MCF 10A (cell line): ENCODE measurements at regions of chr6 and their contacts with region 1.

Region 1: DNA sequence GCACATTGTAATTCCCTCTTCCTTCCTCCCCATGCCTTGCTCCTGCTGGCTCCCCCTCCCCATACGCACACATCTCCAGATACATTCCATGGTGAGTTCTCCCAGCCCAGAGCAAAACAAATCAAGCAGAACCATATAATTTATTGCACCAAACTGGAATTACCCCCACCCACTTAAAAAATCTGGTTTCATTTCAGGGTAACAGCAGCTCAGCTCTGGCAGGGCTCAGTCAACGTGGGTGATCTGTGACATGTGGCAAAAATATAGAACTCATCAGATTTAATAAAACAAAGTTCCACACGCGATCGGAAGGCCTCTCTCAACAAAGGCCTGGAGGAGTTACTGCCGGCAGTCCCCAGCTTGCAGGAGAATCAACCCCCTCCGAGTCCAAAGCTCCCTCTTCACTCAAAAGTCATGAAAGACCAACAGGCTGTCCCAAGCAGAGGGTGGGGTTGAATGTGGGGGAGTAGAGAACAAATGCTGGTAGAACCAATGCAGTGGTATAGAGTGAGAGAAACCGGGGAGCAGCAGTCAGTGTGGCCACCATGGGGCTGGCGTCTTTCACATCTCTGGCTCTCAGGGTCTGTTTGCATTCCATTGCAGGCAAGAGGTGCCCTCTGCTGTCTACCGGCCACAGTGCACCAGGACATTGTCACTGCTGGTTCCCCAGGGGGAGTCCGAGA is 323.3 kb upstream of the NT5E start:
- DNase-seq: peak; percentile 73
- H3K4me3 Mint-ChIP-seq: no peak overlapping the region
- H3K27ac Mint-ChIP-seq: no peak overlapping the region
- H3K4me1 Mint-ChIP-seq: peaks cover 22% of the 10 kb centered on the region
- H3K27me3 Mint-ChIP-seq: no peaks in the 10 kb centered on the region
- CTCF ChIP-seq: peak; percentile 80

Region 2: GRCh38 chr6:84243240-84243639 is 883.4 kb before region 1 on chr6:
- CTCF ChIA-PET with region 1: interaction called, 4 read pairs
- POLR2A ChIA-PET with region 1: no interaction called
- intact Hi-C with region 1: loop called (anchors 1 kb)
- DNase-seq: no peak
- H3K4me3 Mint-ChIP-seq: no peak overlapping the region
- H3K27ac Mint-ChIP-seq: no peak overlapping the region
- H3K4me1 Mint-ChIP-seq: no peaks in the 10 kb centered on the region
- H3K27me3 Mint-ChIP-seq: no peaks in the 10 kb centered on the region
- CTCF ChIP-seq: peak; percentile 27

Region 3: GRCh38 chr6:84340422-84340821 is 786.2 kb before region 1 on chr6:
- CTCF ChIA-PET with region 1: no interaction called
- POLR2A ChIA-PET with region 1: no interaction called
- intact Hi-C with region 1: no loop called
- DNase-seq: no peak
- H3K4me3 Mint-ChIP-seq: no peak overlapping the region
- H3K27ac Mint-ChIP-seq: no peak overlapping the region
- H3K4me1 Mint-ChIP-seq: no peaks in the 10 kb centered on the region
- H3K27me3 Mint-ChIP-seq: no peaks in the 10 kb centered on the region
- CTCF ChIP-seq: no peak

Region 4: DNA sequence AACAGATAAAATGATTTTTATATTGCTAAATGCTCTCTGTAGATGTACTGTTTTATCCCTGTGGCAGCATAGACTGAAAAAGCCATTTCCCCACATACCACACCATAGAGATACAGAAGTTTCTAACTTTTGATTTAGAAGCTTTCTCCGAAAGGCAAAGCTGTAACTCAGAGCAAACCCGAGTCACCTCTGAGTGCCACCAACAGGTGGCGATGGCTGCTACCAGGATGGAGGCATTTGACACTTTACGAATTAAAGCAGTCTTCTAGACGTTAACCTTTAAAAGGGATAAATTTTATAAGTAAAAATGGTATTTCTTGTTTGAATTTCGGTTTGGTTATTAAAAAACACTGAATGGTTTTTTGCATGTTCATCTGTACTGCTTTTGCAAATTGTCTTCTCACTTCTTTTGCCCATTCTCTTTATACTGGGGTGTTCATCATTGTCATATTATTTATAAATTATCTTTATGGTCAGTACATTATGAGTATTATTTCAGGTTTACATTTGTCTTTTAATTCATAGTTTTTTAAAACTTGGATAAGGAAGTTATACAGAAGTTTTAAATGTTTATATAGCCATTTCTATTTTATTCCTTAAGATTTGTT is 698.2 kb before region 1 on chr6:
- CTCF ChIA-PET with region 1: interaction called, 6 read pairs
- POLR2A ChIA-PET with region 1: no interaction called
- intact Hi-C with region 1: loop called (anchors 1 kb)
- DNase-seq: peak; percentile 66
- H3K4me3 Mint-ChIP-seq: no peak overlapping the region
- H3K27ac Mint-ChIP-seq: no peak overlapping the region
- H3K4me1 Mint-ChIP-seq: peaks cover 22% of the 10 kb centered on the region
- H3K27me3 Mint-ChIP-seq: no peaks in the 10 kb centered on the region
- CTCF ChIP-seq: peak; percentile 86

Region 5: DNA sequence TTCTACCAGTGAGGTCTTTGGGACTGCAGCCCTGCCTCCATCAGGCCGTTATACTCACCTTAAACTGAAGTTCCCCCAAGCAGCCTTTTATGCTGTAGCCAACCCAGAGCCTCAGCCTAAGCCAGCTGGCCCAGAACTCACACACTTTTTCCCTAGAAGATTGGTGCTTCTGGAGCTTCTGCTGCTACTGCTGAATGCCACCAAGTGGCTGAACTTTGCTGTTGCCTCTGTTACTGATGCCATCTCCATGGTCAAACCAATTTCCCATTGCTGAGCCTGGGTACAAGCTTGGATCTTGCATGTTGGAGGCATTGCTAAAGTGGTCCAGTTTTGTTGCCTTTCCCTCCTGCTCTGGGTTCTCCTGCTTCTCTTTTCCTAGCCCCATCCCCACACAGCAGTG is 347.2 kb before region 1 on chr6:
- CTCF ChIA-PET with region 1: interaction called, 4 read pairs
- POLR2A ChIA-PET with region 1: no interaction called
- intact Hi-C with region 1: loop called (anchors 5 kb)
- DNase-seq: peak; percentile 14
- H3K4me3 Mint-ChIP-seq: no peak overlapping the region
- H3K27ac Mint-ChIP-seq: peak overlapping the region; percentile 18
- H3K4me1 Mint-ChIP-seq: peaks cover 22% of the 10 kb centered on the region
- H3K27me3 Mint-ChIP-seq: no peaks in the 10 kb centered on the region
- CTCF ChIP-seq: peak; percentile 10

Region 6: GRCh38 chr6:84973606-84974005 is 153.0 kb before region 1 on chr6:
- CTCF ChIA-PET with region 1: interaction called, 3 read pairs
- POLR2A ChIA-PET with region 1: no interaction called
- intact Hi-C with region 1: loop called (anchors 2 kb)
- DNase-seq: no peak
- H3K4me3 Mint-ChIP-seq: no peak overlapping the region
- H3K27ac Mint-ChIP-seq: no peak overlapping the region
- H3K4me1 Mint-ChIP-seq: peaks cover 13% of the 10 kb centered on the region
- H3K27me3 Mint-ChIP-seq: no peaks in the 10 kb centered on the region
- CTCF ChIP-seq: no peak

Region 7: DNA sequence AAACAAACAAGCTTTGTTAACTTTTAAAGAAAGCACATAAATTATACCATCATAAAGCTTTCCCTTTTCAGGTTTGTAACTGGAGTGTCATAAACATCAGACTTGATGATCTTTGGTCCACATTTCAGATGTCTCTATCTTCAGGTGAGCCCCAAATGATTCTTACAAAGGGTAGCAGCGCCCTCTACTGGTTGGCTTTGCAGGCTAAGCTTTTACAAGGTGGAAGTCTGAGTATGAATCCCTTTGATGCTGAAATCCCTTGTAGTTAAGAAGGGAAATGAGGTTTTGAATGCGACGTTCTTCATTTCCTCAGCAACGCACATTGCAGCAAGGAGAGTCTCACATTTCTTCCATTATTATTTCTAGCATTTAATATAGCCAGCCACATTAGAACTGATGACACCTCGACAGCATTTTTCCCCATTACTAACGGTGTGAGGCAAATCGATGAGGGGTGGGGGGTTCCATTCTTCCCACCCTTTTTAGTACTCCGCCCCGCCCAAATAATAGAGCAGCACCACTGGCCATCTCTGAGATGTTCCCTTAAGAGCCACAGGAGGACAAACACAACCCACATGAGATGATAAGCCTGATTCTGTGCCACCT is 196.9 kb after region 1 on chr6:
- CTCF ChIA-PET with region 1: interaction called, 12 read pairs
- POLR2A ChIA-PET with region 1: no interaction called
- intact Hi-C with region 1: loop called (anchors 5 kb)
- DNase-seq: peak; percentile 89
- H3K4me3 Mint-ChIP-seq: no peak overlapping the region
- H3K27ac Mint-ChIP-seq: no peak overlapping the region
- H3K4me1 Mint-ChIP-seq: no peaks in the 10 kb centered on the region
- H3K27me3 Mint-ChIP-seq: no peaks in the 10 kb centered on the region
- CTCF ChIP-seq: peak; percentile 85